ENCODE measurements at regions of chr1 and their contacts with region 1.

Region 1: DNA sequence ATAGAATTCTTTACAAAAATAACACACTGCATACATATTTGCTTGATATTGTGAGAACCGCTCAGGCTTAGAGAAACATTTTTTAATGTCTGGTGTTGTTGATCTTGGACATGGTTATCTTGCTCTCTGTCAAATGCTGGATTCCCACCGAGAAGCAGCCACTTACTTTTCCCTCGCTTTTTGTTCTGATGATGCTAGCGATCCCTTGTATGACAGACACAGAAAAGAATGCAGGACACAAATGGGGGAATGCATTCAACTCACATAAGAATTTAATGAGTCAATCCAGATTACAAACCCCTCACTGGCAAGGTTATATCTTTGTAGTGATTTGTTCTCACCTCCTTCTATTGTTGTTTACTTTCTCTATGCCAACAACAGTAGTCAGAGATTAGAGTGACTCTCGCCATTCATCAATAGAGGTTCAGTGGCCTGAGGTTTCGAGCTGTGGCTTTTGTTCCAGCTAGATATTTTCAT is 76.8 kb upstream of the AKT3 start:
- DNase-seq: no peak
- H3K4me3 ChIP-seq: no peak overlapping the region
- H3K27ac ChIP-seq: no peak overlapping the region
- H3K4me1 ChIP-seq: no peaks in the 10 kb centered on the region
- H3K27me3 ChIP-seq: no peaks in the 10 kb centered on the region
- CTCF ChIP-seq: no peak
- EP300 ChIP-seq: no peak
- POLR2A ChIP-seq: no peak

Region 2: DNA sequence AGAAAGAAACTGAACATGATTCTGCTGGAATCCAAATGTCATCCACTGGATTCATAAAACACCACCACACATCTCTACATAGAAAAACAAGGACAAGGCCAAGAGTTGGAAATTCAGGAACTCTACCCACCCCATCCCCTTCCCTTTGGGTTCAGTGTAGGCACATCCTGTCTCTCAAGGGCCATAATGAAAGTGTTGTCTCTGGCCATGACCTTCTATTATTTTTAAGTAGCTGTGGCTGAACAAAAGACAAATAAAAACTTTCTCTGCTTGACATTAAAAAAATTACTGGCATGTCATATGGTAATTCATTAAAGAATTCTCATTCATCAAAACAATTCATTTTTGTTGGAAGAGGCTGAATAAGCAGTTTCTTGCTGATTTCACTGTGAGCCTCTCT is 69.4 kb after region 1 on chr1:
- intact Hi-C with region 1: no loop called
- DNase-seq: no peak
- H3K4me3 ChIP-seq: no peak overlapping the region
- H3K27ac ChIP-seq: no peak overlapping the region
- H3K4me1 ChIP-seq: no peaks in the 10 kb centered on the region
- H3K27me3 ChIP-seq: no peaks in the 10 kb centered on the region
- CTCF ChIP-seq: no peak
- EP300 ChIP-seq: no peak
- POLR2A ChIP-seq: no peak

Region 3: GRCh38 chr1:244154872-244155531 is 228.2 kb after region 1 on chr1:
- intact Hi-C with region 1: loop called in 1 of 4 experiments (anchors 10 kb)
- DNase-seq: no peak
- H3K4me3 ChIP-seq: no peak overlapping the region
- H3K27ac ChIP-seq: no peak overlapping the region
- H3K4me1 ChIP-seq: no peaks in the 10 kb centered on the region
- H3K27me3 ChIP-seq: no peaks in the 10 kb centered on the region
- CTCF ChIP-seq: no peak
- EP300 ChIP-seq: no peak
- POLR2A ChIP-seq: no peak

Measured in ovary (tissue), 10 donors.